Right ventricle myocardium superior (tissue), 1 donor: ENCODE measurements at regions of chr1 and their contacts with region 1.

Region 1: GRCh38 chr1:37978541-37978940 is 11.3 kb downstream of the SF3A3 start:
- DNase-seq: no peak
- ATAC-seq: no peak

Region 2: GRCh38 chr1:37890378-37891014 is 88.0 kb before region 1 on chr1:
- intact Hi-C with region 1: loop called (anchors 5 kb)
- DNase-seq: no peak
- ATAC-seq: peak; percentile 58